ENCODE measurements at regions of chr1 and their contacts with region 1.

Region 1: DNA sequence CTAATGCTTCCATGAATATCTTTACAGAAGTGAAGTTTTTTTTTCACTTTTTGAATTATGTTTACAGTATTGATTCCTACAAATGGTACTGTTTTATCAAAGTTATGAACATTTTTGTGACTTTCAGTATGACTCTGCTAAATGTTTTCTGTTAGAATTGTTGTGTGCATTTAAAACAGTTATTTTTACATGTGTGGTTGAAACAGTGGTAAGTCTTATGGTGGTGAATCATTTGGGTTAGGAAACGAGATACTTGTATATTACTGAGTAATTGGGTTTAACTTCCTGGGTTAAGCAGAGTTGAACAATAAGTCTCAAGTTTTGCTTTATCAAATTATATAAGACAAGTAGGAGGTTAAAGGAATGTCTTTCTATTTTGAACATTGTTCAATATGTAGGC is 66.8 kb downstream of the VPS13D start:
- DNase-seq: no peak
- ATAC-seq: peak; percentile 90
- H3K4me3 Mint-ChIP-seq: no peak overlapping the region
- H3K27ac Mint-ChIP-seq: no peak overlapping the region
- H3K4me1 Mint-ChIP-seq: peaks cover 22% of the 10 kb centered on the region
- H3K27me3 Mint-ChIP-seq: no peaks in the 10 kb centered on the region

Region 2: DNA sequence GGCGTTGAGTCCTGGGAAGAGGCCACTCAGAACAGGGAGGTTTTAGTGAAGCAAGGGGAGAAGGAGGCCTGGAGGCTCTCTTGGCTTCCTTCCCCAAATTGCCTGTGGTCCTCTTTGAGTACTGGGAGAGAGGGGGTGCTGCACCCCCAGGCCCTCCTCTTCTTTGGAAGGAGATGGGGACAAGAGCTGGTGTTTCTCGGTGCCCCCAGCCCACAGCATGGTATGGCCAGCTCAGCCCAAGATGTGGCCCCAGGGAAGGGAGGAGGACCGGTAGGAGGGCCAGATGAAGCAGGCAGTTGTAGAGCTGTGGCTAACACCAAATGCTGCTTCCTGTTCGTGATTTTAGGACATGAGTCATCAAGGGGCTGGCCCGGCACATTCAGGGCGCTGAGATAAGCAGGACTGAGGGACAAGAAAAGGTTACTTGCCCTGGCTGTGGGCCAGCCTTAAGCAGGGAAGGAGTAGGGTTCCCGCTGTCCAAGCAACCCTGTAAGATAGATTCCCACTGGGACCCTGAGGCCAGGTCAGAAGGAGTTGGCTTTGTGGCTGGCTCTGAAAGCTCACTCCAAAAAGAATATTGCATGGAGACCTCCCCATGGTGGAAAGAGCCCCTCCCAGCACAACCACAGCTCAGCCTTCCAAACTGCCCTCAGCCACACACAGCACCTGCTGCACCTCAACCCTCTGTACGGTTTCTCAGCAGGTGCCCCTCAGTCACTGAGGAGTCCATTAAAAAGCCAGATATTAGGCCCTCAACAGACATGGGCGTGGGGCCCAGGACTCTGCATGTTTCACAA is 134.8 kb before region 1 on chr1:
- CTCF ChIA-PET with region 1: no interaction called
- POLR2A ChIA-PET with region 1: no interaction called
- intact Hi-C with region 1: loop called in 1 of 2 experiments (anchors 1 kb)
- DNase-seq: peak; percentile 89
- ATAC-seq: peak; percentile 84
- H3K4me3 Mint-ChIP-seq: peak overlapping the region; percentile 15
- H3K27ac Mint-ChIP-seq: peak overlapping the region; percentile 91
- H3K4me1 Mint-ChIP-seq: peaks cover 73% of the 10 kb centered on the region
- H3K27me3 Mint-ChIP-seq: no peaks in the 10 kb centered on the region

Region 3: GRCh38 chr1:12344596-12345349 is 48.1 kb after region 1 on chr1:
- CTCF ChIA-PET with region 1: no interaction called
- POLR2A ChIA-PET with region 1: no interaction called
- intact Hi-C with region 1: loop called in 1 of 2 experiments (anchors 1 kb)
- DNase-seq: peak; percentile 58
- ATAC-seq: peak; percentile 68
- H3K4me3 Mint-ChIP-seq: peak overlapping the region; percentile 63
- H3K27ac Mint-ChIP-seq: peak overlapping the region; percentile 93
- H3K4me1 Mint-ChIP-seq: peaks cover 61% of the 10 kb centered on the region
- H3K27me3 Mint-ChIP-seq: no peaks in the 10 kb centered on the region

Region 4: GRCh38 chr1:12376106-12377045 is 79.8 kb after region 1 on chr1:
- CTCF ChIA-PET with region 1: no interaction called
- POLR2A ChIA-PET with region 1: no interaction called
- intact Hi-C with region 1: no loop called
- DNase-seq: no peak
- ATAC-seq: no peak
- H3K4me3 Mint-ChIP-seq: no peak overlapping the region
- H3K27ac Mint-ChIP-seq: no peak overlapping the region
- H3K4me1 Mint-ChIP-seq: peaks cover 6% of the 10 kb centered on the region
- H3K27me3 Mint-ChIP-seq: no peaks in the 10 kb centered on the region

Region 5: DNA sequence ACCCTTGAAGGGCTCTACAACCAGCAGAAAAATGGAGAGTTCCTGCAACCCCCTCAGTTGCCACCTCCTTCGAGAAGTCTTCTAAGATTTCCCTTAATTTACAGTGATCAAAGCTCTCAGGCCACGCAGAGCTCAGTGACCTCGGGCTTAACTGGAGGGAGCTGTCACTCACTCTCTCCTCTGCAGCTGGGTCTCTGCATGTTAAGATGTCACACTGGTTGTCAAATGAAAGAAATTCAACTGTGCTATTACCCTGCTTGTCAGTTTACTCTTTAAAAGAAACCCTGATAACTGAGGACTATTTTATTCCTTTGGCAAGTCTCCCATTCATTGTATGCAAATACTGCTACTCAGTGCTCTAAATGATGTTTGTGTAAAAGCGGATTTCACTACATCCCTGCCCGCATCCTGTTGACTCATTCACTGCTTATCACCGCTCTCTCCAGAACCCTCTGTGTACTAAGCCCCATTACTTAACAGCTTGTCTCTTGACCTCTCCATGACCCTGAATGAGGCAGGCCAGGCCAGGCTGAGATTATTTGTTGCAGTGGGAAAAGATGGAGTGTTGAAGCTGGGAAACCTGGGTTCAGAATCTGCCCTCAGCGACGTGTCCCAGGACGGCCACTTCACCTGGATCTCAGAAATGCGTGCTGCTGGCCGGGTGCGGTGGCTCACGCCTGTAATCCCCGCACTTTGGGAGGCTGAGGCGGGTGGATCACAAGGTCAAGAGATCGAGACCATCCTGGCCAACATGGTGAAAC is 307.7 kb after region 1 on chr1:
- CTCF ChIA-PET with region 1: no interaction called
- POLR2A ChIA-PET with region 1: no interaction called
- intact Hi-C with region 1: loop called in 1 of 2 experiments (anchors 1 kb)
- DNase-seq: peak; percentile 85
- ATAC-seq: peak; percentile 97
- H3K4me3 Mint-ChIP-seq: peak overlapping the region; percentile 21
- H3K27ac Mint-ChIP-seq: peak overlapping the region; percentile 74
- H3K4me1 Mint-ChIP-seq: peaks cover 49% of the 10 kb centered on the region
- H3K27me3 Mint-ChIP-seq: no peaks in the 10 kb centered on the region

Measured in activated CD4-positive, alpha-beta T cell treated with anti-CD3 and anti-CD28 coated beads for 36 hours (primary cell).